BJ (cell line): ENCODE measurements at regions of chr22 and their contacts with region 1.

Region 1: GRCh38 chr22:43884600-43885325 is 7.0 kb downstream of the PNPLA5 start:
- DNase-seq: no peak
- H3K4me3 ChIP-seq: no peak overlapping the region
- H3K27me3 ChIP-seq: peaks cover 11% of the 10 kb centered on the region
- CTCF ChIP-seq: peak; percentile 93

Region 2: DNA sequence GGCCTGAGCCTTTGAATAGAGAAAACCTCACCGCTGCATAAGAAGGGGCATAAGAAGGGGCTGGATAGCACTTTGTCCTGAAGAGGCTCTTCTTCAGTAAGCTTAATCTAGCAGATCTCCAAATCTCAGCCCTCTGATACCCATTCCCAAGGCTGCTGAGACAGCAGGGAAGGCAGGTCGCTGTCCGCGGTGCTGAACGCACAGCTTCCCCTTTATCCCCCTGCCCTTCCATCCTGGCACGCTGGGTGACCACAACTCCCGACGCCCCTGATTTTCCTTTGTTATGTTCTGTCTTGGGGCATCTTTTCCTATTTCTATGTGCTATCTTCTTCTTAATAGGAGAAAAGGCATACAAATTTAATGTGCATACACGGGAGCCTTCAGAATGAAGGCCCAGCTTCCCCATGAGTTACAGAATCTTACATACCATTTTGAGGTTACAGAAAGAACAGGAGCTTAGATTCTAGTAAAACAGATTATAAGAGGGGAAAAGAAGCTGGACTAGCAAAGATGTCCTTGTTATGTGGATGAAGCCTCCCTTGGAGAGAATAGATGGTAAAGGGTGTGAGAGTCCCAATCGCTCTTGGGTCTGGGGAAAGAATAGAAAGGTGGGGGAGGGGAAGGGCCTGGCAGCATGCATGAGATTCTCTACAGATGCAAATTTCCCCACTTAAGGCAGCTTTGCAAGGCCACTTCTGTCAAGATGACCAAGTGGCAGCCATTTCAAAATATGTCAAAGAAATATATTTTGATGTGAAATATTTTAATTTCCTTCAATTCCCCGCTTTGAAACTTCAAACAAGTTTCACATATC is 16.7 kb before region 1 on chr22:
- CTCF ChIA-PET with region 1: interaction called, 13 read pairs
- POLR2A ChIA-PET with region 1: no interaction called
- DNase-seq: no peak
- H3K4me3 ChIP-seq: no peak overlapping the region
- H3K27me3 ChIP-seq: no peaks in the 10 kb centered on the region; the same call in 1 of the 2 replicates
- CTCF ChIP-seq: no peak

Region 3: DNA sequence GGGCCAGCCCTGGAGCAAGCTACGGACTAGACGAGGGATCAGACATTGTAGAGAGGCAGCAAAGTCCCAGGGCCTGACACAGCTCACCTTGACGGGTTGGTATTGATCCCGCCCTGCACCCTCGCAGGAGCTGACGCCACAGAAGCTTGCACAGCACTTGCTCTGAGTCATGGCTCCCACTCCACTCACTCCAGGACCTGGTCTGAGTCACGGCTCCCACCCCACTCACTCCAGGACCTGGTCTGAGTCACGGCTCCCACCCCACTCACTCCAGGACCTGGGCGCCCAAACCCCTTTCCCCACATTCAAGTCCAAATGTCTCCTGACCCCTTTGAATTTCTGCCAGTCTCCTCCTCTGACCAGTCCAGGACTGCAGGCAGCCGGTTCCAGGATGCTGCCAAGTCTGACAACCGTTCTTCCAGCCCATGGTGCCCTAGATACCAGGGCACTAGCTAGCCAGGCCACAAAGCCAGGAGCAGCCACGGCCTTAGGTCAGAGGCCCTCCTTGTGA is 13.0 kb after region 1 on chr22:
- CTCF ChIA-PET with region 1: interaction called, 18 read pairs
- POLR2A ChIA-PET with region 1: no interaction called
- DNase-seq: no peak
- H3K4me3 ChIP-seq: no peak overlapping the region
- H3K27me3 ChIP-seq: no peaks in the 10 kb centered on the region; the same call in 1 of the 2 replicates
- CTCF ChIP-seq: no peak

Region 4: DNA sequence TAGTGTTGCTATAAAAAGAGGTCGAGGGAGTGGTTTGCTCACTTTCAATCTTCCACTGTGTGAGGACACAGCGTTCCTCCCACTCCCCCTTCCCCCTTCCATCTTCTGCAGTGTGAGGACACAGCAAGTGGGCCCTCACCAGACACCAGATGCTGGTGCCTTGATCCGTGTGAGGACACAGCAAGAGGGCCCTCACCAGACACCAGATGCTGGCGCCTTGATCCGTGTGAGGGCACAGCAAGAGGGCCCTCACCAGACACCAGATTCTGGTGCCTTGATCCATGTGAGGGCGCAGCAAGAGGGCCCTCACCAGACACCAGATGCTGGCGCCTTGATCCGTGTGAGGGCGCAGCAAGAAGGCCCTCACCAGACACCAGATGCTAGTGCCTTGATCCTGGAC is 31.1 kb after region 1 on chr22:
- CTCF ChIA-PET with region 1: interaction called, 15 read pairs
- POLR2A ChIA-PET with region 1: no interaction called
- DNase-seq: no peak
- H3K4me3 ChIP-seq: no peak overlapping the region
- H3K27me3 ChIP-seq: peaks cover 5% of the 10 kb centered on the region
- CTCF ChIP-seq: no peak

Region 5: DNA sequence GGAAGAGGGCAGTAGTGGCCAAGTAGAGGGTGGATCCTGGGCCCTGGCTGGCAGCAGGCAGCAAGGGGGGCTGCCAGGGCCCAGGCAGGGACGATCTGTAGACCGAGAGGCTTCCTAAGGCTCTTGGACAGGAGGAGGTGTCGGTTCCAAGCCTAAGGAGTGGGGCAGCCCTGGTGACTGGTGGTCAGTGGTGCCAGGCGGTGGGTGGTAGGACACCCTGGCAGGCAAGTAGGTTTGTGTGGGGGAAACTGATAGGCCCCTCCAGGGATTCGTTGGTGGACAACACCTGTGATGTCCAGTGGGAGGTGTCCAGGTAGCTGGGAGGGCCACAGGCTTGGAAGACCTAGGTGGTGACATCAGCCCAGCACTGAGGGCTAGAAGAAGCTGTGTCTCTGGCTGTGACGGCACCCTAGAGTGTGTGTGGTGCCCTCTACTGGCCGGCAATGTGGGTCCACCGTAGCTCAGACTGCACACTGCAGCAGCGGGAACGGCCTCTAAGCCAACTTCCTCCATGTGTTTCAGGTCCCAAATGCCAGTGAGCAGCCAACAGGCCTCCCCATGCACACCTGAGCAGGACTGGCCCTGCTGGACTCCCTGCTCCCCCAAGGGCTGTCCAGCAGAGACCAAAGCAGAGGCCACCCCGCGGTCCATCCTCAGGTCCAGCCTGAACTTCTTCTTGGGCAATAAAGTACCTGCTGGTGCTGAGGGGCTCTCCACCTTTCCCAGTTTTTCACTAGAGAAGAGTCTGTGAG is 61.0 kb after region 1 on chr22:
- CTCF ChIA-PET with region 1: interaction called, 178 read pairs
- POLR2A ChIA-PET with region 1: no interaction called
- DNase-seq: no peak
- H3K4me3 ChIP-seq: no peak overlapping the region
- H3K27me3 ChIP-seq: no peaks in the 10 kb centered on the region
- CTCF ChIP-seq: peak; percentile 81

Region 6: DNA sequence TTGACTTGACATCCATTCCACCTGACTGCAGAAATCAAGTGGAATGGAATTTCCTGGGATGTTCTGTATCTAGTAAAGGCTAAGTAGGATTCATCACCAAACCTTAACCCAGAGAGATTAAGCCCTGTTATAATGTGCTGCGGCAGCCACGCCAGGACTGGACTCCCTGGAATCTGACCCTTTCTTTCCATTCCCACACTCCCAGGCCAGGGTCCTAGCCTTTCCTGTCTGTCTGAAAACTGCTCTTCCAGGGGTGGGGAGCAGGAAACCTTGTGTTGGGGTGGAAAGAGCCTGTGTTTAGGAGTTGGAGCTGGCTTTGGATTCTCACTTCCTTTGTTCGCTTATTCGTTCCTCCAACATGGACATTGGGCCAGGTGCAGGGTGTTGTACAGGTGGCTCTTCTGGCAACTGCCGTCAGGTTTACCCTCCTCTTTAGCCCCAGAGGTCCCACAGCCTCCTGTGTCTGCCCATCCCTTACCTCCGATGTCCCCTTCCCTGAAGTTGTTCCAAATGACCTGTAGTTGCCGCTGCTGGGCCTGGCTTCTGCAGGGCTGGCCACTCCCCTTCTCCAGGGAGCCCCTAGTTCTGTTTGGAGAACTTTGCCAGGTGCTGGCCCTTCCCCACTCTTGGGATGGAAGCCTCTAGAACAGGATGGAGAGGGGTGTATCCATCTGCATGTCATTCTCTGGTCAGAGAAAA is 118.8 kb after region 1 on chr22:
- CTCF ChIA-PET with region 1: no interaction called
- POLR2A ChIA-PET with region 1: no interaction called
- DNase-seq: no peak
- H3K4me3 ChIP-seq: no peak overlapping the region
- H3K27me3 ChIP-seq: no peaks in the 10 kb centered on the region
- CTCF ChIP-seq: peak; percentile 26; the same call in 1 of the 2 replicates